Endothelial cell of umbilical vein (primary cell): ENCODE measurements at regions of chr10 and their contacts with region 1.

Region 1: GRCh38 chr10:16995867-16996529 is 133.6 kb downstream of the CUBN start:
- DNase-seq: peak; percentile 96
- H3K4me3 ChIP-seq: peak overlapping the region in 1 of 3 experiments; percentile 39
- H3K27ac ChIP-seq: peak overlapping the region; percentile 98
- H3K4me1 ChIP-seq: peaks cover 57% of the 10 kb centered on the region
- H3K27me3 ChIP-seq: no peaks in the 10 kb centered on the region
- CTCF ChIP-seq: no peak
- POLR2A ChIP-seq: peak; percentile 76

Region 2: DNA sequence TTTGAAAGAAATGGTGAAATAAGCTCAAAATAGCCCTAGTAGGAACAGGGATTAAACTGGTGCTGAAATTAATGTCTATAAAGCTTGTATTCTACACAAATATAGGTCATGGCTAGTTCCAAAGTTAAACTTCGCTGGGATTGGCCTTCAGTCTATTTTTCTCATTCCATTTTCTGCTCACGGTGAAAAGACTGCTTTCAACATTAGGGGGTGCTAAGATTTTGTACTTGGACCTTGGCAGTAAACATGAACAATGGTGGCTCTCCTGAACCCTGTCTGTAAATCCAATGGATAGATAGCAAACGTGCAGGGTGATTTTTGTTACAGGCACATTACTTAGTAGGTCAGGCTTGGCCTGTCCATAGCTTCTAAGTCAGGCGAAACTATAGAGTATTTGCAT is 142.8 kb before region 1 on chr10:
- CTCF ChIA-PET with region 1: interaction called, 8 read pairs
- POLR2A ChIA-PET with region 1: no interaction called
- dilution Hi-C with region 1: no loop called
- intact Hi-C with region 1: loop called (anchors 2 kb)
- DNase-seq: peak; percentile 73
- H3K4me3 ChIP-seq: no peak overlapping the region
- H3K27ac ChIP-seq: no peak overlapping the region
- H3K4me1 ChIP-seq: peaks cover 23% of the 10 kb centered on the region
- H3K27me3 ChIP-seq: no peaks in the 10 kb centered on the region
- CTCF ChIP-seq: peak; percentile 35 to 39
- POLR2A ChIP-seq: no peak

Region 3: DNA sequence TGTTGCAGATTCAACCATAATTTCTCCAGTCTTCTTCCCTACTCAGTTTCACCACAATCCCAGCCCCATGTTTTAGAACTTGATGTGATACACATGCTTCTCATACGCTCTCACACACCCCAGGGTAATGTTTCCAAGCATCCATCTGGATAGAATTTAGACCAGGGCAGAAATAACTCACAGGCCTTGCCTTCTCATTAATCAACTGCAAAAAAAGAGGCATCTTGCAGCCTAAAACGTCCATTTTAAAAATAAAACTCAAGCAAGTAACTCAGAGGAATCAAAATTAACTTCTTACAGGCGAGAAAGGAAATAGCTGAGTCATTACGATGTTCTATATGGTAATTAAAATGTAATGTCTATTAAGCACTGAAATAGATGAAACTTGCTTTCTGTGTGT is 51.6 kb before region 1 on chr10:
- CTCF ChIA-PET with region 1: no interaction called
- POLR2A ChIA-PET with region 1: no interaction called
- dilution Hi-C with region 1: no loop called
- intact Hi-C with region 1: loop called (anchors 2 kb)
- DNase-seq: peak; percentile 65
- H3K4me3 ChIP-seq: no peak overlapping the region
- H3K27ac ChIP-seq: peak overlapping the region; percentile 59
- H3K4me1 ChIP-seq: peaks cover 20% of the 10 kb centered on the region
- H3K27me3 ChIP-seq: no peaks in the 10 kb centered on the region
- CTCF ChIP-seq: no peak
- POLR2A ChIP-seq: no peak

Region 4: DNA sequence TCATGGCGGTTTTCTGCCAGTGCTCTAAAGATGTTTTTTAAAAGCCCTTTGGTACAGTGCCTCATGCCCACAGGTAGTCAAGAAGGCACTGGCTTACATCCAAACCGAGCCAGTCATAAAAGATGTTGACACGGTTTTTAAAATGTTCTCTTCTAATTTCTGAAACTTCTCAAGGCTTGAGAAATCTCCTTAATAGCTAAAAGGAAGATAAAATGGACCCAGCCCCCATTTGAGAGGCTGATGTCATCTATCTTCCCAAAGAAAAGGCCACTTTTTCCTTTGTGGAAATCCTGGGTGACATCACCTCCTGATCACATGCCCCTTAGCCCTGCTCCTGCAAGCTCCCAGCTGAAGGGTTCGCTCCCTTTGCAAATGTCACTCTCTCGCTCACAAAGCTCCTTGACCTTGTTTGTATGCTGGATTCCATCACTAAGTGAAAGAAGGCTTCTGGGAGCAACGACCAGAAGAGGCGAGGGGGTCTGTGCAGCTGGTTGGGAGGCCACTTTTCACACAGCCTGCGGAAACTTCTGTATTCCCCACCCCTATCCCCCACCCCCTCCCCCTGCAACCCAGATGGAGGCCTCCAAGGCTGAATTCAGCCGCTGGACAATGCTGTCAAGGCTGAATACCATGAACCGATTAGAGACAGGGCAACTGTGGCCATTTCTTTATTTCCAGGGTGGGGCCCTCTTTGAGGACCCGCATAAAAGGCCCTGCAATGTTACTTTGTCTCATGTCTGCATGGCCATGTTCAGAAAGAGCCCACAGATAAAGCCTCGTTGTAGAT is 10.8 kb after region 1 on chr10:
- CTCF ChIA-PET with region 1: interaction called, 8 read pairs
- POLR2A ChIA-PET with region 1: interaction called, 3 read pairs
- dilution Hi-C with region 1: no loop called
- intact Hi-C with region 1: loop called (anchors 2 kb)
- DNase-seq: peak; percentile 88
- H3K4me3 ChIP-seq: no peak overlapping the region
- H3K27ac ChIP-seq: peak overlapping the region; percentile 89
- H3K4me1 ChIP-seq: peaks cover 63% of the 10 kb centered on the region
- H3K27me3 ChIP-seq: no peaks in the 10 kb centered on the region
- CTCF ChIP-seq: no peak
- POLR2A ChIP-seq: no peak

Region 5: GRCh38 chr10:17062955-17063484 is 67.0 kb after region 1 on chr10:
- CTCF ChIA-PET with region 1: interaction called, 11 read pairs
- POLR2A ChIA-PET with region 1: interaction called, 4 read pairs
- dilution Hi-C with region 1: no loop called
- intact Hi-C with region 1: loop called (anchors 1 kb)
- DNase-seq: peak; percentile 90
- H3K4me3 ChIP-seq: peak overlapping the region in 1 of 3 experiments; percentile 20
- H3K27ac ChIP-seq: peak overlapping the region; percentile 100
- H3K4me1 ChIP-seq: peaks cover 76% of the 10 kb centered on the region
- H3K27me3 ChIP-seq: no peaks in the 10 kb centered on the region
- CTCF ChIP-seq: no peak
- POLR2A ChIP-seq: peak; percentile 44

Region 6: DNA sequence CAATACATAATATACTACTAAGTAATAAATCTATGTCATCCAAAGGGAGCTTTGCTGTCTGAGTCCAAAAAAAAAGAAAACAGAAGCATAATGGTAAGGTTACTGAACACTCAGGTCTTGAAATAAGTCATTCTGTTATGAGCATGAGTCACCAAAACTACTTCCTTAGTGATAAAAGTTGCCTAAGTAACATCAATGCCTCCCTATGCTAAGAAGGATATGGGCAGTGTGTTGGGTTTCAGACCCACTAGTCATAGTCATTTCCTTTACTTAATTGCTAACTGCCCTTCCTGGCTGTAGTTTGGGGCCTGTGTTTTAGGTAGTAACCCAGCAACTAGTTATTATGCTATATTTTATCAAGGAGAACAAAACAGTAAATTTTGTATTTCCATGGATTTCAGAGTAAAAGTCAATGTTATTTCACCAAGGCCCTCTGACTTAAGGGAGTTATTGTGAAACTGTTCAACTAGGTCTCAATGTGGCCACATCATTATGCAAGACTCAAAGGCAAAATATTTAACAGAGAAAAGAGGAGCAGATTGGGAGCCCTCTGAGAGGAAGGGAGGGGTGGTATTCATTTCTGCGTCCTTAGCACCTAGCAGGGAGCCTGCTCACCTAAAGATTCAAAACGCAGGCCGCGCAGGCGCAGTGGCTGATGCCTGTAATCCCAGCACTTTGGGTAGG is 220.4 kb after region 1 on chr10:
- CTCF ChIA-PET with region 1: no interaction called
- POLR2A ChIA-PET with region 1: no interaction called
- dilution Hi-C with region 1: no loop called
- intact Hi-C with region 1: loop called (anchors 1 kb)
- DNase-seq: peak; percentile 98
- H3K4me3 ChIP-seq: peak overlapping the region in 1 of 3 experiments; percentile 3
- H3K27ac ChIP-seq: peak overlapping the region; percentile 99
- H3K4me1 ChIP-seq: peaks cover 33% of the 10 kb centered on the region
- H3K27me3 ChIP-seq: no peaks in the 10 kb centered on the region
- CTCF ChIP-seq: no peak
- POLR2A ChIP-seq: peak; percentile 77